ENCODE measurements at regions of chr5 and their contacts with region 1.

Region 1: DNA sequence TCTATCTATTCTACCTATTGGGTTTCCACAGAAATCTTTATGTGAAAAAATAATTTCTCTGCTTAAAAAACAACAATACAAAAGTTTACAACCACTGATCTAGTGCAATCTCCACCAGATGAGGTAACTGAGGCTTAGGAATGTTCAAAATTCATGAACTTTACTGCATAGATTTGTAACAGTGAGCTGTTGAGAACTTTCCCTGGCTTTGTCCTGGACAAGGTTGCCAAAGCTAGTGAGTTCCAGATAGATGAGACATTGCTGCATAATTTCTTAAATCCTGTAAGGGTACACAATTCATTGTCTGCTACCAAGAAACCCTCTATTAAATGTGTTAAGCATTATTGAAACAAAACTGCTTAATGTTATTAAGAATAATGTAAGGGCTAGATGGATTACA is 102.7 kb downstream of the OSMR start:
- DNase-seq: no peak
- ATAC-seq: no peak
- H3K4me3 ChIP-seq: no peak overlapping the region
- H3K4me3 Mint-ChIP-seq: no peak overlapping the region
- H3K27ac ChIP-seq: no peak overlapping the region
- H3K27ac Mint-ChIP-seq: peak overlapping the region in 1 of 9 donors; percentile 25
- H3K4me1 ChIP-seq: no peaks in the 10 kb centered on the region
- H3K4me1 Mint-ChIP-seq: peaks cover 0 to 13% (median 0%) of the 10 kb centered on the region in 7 donors
- H3K27me3 ChIP-seq: no peaks in the 10 kb centered on the region
- H3K27me3 Mint-ChIP-seq: no peaks in the 10 kb centered on the region

Region 2: DNA sequence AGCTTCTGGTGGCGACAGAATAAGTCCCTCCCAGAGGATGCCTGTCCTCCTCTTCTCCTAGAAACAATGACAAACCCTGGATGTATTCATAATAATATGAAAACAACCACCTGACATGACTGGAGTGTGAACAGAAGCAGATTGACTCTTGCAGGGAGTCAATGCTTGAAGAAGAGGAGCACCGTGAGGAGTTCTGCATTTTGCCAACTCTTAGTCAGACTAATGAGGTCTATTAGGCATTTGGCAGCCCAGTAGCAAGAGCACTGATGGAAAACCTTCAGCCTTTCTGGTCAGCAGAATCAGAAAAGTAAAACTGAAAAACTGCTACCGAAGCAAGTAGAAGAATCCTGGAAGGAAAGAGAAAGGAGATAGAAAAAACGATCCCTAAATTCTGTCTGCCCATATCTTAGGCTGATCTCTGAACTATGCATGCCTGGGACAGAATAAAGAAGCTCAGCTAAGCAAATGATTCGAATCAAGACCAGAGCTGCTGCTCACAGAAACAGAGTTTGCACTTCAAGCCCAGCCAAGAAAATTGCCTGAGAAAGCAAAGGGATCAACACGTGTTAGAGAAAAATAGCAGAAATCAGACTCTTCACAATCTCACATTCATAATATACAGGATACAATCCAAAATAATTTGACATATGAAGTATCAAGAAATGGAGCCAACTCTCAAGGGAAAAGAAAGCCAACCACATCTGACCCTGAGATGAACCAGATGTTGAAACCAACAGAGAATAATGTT is 172.2 kb before region 1 on chr5:
- CTCF ChIA-PET with region 1: no interaction called
- POLR2A ChIA-PET with region 1: no interaction called
- intact Hi-C with region 1: no loop called
- DNase-seq: no peak
- ATAC-seq: no peak
- H3K4me3 ChIP-seq: no peak overlapping the region
- H3K4me3 Mint-ChIP-seq: no peak overlapping the region
- H3K27ac ChIP-seq: no peak overlapping the region
- H3K27ac Mint-ChIP-seq: no peak overlapping the region
- H3K4me1 ChIP-seq: no peaks in the 10 kb centered on the region
- H3K4me1 Mint-ChIP-seq: no peaks in the 10 kb centered on the region
- H3K27me3 ChIP-seq: no peaks in the 10 kb centered on the region
- H3K27me3 Mint-ChIP-seq: peaks cover 7 to 28% (median 22%) of the 10 kb centered on the region in 5 donors

Region 3: DNA sequence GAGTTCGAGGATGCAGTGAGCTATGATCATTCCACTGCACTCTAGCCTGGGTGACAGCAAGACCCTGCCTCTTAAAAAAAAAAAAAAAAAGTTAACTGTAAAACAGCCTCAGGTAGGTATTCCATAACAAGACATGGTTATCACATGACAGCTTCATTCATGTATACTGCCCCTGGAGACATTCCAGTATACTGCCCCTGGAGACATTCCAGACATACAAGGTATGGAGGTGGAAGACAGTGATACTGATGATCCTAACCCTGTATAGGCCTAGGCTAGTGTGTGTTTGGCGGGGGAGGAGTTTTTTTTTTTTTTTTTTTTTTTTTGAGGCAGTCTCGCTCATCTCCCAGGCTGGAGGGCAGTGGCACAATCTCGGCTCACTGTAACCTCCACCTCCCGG is 20.2 kb after region 1 on chr5:
- CTCF ChIA-PET with region 1: no interaction called
- POLR2A ChIA-PET with region 1: no interaction called
- intact Hi-C with region 1: loop called in 1 of 2 experiments (anchors 2 kb)
- DNase-seq: no peak
- ATAC-seq: no peak
- H3K4me3 ChIP-seq: no peak overlapping the region
- H3K4me3 Mint-ChIP-seq: no peak overlapping the region
- H3K27ac ChIP-seq: no peak overlapping the region
- H3K27ac Mint-ChIP-seq: no peak overlapping the region
- H3K4me1 ChIP-seq: no peaks in the 10 kb centered on the region
- H3K4me1 Mint-ChIP-seq: peaks cover 0 to 4% (median 0%) of the 10 kb centered on the region in 7 donors
- H3K27me3 ChIP-seq: no peaks in the 10 kb centered on the region
- H3K27me3 Mint-ChIP-seq: no peaks in the 10 kb centered on the region